OCI-LY7 (cell line): ENCODE measurements at regions of chr9 and their contacts with region 1.

Region 1: DNA sequence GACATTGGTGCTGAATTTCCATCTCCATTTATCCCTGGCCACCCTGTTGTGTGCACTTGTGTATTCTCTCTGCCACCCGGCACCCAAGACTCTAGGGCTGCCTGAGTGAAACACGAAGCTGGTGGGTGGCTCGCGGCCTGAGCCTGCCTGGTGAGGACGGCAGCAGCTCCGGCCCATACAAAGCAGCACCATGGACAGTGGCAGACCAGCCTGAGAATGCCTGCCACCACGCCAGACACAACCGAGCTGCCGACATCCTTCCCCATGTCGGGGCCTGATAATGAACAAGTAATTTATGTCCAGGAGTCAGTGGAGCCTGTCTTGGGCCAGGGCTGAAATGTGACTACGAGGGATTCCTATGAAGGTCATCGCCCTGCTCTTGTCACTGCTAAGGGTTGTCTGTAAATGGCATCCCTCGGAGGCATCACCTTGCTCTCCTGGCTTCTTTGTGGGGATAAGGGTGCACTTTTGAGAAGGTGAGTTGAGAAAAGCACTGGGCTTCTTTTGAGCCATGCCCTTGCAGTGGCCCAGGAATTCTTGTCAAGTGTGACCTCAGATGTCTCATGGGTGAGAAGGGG is 175.7 kb downstream of the MELK start:
- DNase-seq: peak; percentile 47
- H3K4me3 ChIP-seq: no peak overlapping the region
- H3K27ac ChIP-seq: no peak overlapping the region
- H3K4me1 ChIP-seq: peaks cover 14% of the 10 kb centered on the region
- CTCF ChIP-seq: no peak

Region 2: GRCh38 chr9:36118706-36119105 is 629.7 kb before region 1 on chr9:
- CTCF ChIA-PET with region 1: no interaction called
- POLR2A ChIA-PET with region 1: no interaction called
- intact Hi-C with region 1: no loop called
- DNase-seq: no peak
- H3K4me3 ChIP-seq: no peak overlapping the region
- H3K27ac ChIP-seq: no peak overlapping the region
- H3K4me1 ChIP-seq: no peaks in the 10 kb centered on the region
- CTCF ChIP-seq: no peak

Region 3: GRCh38 chr9:36759141-36759540 is 10.7 kb after region 1 on chr9:
- CTCF ChIA-PET with region 1: no interaction called
- POLR2A ChIA-PET with region 1: interaction called, 10 read pairs
- intact Hi-C with region 1: no loop called
- DNase-seq: no peak
- H3K4me3 ChIP-seq: no peak overlapping the region
- H3K27ac ChIP-seq: no peak overlapping the region
- H3K4me1 ChIP-seq: peaks cover under 1% of the 10 kb centered on the region
- CTCF ChIP-seq: no peak